ENCODE measurements at regions of chr1 and their contacts with region 1.

Region 1: GRCh38 chr1:219422811-219423598 is 189.9 kb downstream of the ZC3H11B start:
- DNase-seq: peak; percentile 97
- ATAC-seq: peak; percentile 97
- H3K4me3 ChIP-seq: peak overlapping the region; percentile 11; the same call in 1 of the 2 replicates
- H3K27ac ChIP-seq: peak overlapping the region; percentile 86
- H3K4me1 ChIP-seq: peaks cover 22% of the 10 kb centered on the region
- H3K27me3 ChIP-seq: no peaks in the 10 kb centered on the region
- CTCF ChIP-seq: no peak

Region 2: GRCh38 chr1:219236933-219237610 is 185.9 kb before region 1 on chr1:
- CTCF ChIA-PET with region 1: no interaction called
- POLR2A ChIA-PET with region 1: no interaction called
- intact Hi-C with region 1: no loop called
- DNase-seq: no peak
- ATAC-seq: no peak
- H3K4me3 ChIP-seq: no peak overlapping the region
- H3K27ac ChIP-seq: no peak overlapping the region
- H3K4me1 ChIP-seq: no peaks in the 10 kb centered on the region
- H3K27me3 ChIP-seq: no peaks in the 10 kb centered on the region
- CTCF ChIP-seq: no peak

Region 3: GRCh38 chr1:219317762-219318353 is 105.1 kb before region 1 on chr1:
- CTCF ChIA-PET with region 1: no interaction called
- POLR2A ChIA-PET with region 1: no interaction called
- intact Hi-C with region 1: loop called (anchors 2 kb)
- DNase-seq: peak; percentile 82
- ATAC-seq: peak; percentile 59
- H3K4me3 ChIP-seq: no peak overlapping the region
- H3K27ac ChIP-seq: no peak overlapping the region
- H3K4me1 ChIP-seq: peaks cover 16% of the 10 kb centered on the region
- H3K27me3 ChIP-seq: no peaks in the 10 kb centered on the region
- CTCF ChIP-seq: peak; percentile 98

Region 4: GRCh38 chr1:219324629-219325367 is 98.2 kb before region 1 on chr1:
- CTCF ChIA-PET with region 1: no interaction called
- POLR2A ChIA-PET with region 1: no interaction called
- intact Hi-C with region 1: loop called (anchors 2 kb)
- DNase-seq: peak; percentile 100
- ATAC-seq: peak; percentile 90
- H3K4me3 ChIP-seq: peak overlapping the region; percentile 44
- H3K27ac ChIP-seq: peak overlapping the region; percentile 90
- H3K4me1 ChIP-seq: peaks cover 40% of the 10 kb centered on the region
- H3K27me3 ChIP-seq: no peaks in the 10 kb centered on the region
- CTCF ChIP-seq: no peak

Region 5: GRCh38 chr1:219442611-219443061 is 19.6 kb after region 1 on chr1:
- CTCF ChIA-PET with region 1: no interaction called
- POLR2A ChIA-PET with region 1: interaction called, 3 read pairs
- intact Hi-C with region 1: loop called (anchors 1 kb)
- DNase-seq: peak; percentile 99
- ATAC-seq: peak; percentile 84
- H3K4me3 ChIP-seq: peak overlapping the region; percentile 23; the same call in 1 of the 2 replicates
- H3K27ac ChIP-seq: peak overlapping the region; percentile 81
- H3K4me1 ChIP-seq: peaks cover 48% of the 10 kb centered on the region
- H3K27me3 ChIP-seq: no peaks in the 10 kb centered on the region
- CTCF ChIP-seq: no peak

Measured in PC-3 (cell line).